B cell (primary cell): ENCODE measurements at regions of chr14 and their contacts with region 1.

Region 1: GRCh38 chr14:76876076-76876475 is 49.9 kb downstream of the LRRC74A start:
- DNase-seq: peak; percentile 68
- ATAC-seq: peak; percentile 55
- H3K4me3 ChIP-seq: no peak overlapping the region
- H3K4me3 Mint-ChIP-seq: no peak overlapping the region
- H3K27ac ChIP-seq: no peak overlapping the region
- H3K27ac Mint-ChIP-seq: no peak overlapping the region
- H3K4me1 ChIP-seq: no peaks in the 10 kb centered on the region
- H3K4me1 Mint-ChIP-seq: no peaks in the 10 kb centered on the region
- H3K27me3 ChIP-seq: peaks cover 0 to 3% (median 0%) of the 10 kb centered on the region in 4 experiments
- H3K27me3 Mint-ChIP-seq: peaks cover 4% of the 10 kb centered on the region
- CTCF ChIP-seq: peak; percentile 74

Region 2: DNA sequence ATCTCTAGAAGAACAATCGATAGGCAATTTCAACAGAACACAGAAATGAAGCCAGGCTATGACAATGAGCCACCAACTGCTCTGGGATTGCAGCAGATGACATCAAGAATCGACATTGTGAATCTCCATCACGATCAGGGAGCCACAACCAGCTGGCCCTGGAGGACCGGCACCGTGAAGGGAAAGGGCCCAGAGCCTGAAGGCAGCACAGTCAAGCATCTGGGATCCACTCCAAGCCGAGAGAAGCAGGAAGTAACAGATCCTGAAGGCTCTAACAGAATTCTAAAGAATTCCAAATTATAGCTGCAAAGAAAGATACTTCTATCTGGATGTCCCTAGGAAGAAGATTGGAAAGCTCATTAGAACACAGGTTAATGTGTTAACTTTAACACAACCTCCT is 11.1 kb after region 1 on chr14:
- CTCF ChIA-PET with region 1: interaction called, 10 read pairs
- POLR2A ChIA-PET with region 1: no interaction called
- intact Hi-C with region 1: no loop called
- DNase-seq: no peak
- ATAC-seq: no peak
- H3K4me3 ChIP-seq: no peak overlapping the region
- H3K4me3 Mint-ChIP-seq: no peak overlapping the region
- H3K27ac ChIP-seq: no peak overlapping the region
- H3K27ac Mint-ChIP-seq: no peak overlapping the region
- H3K4me1 ChIP-seq: peaks cover 7 to 10% of the 10 kb centered on the region in 2 donors
- H3K4me1 Mint-ChIP-seq: peaks cover 6% of the 10 kb centered on the region
- H3K27me3 ChIP-seq: peaks cover 0 to 4% (median 1%) of the 10 kb centered on the region in 4 experiments
- H3K27me3 Mint-ChIP-seq: peaks cover 14% of the 10 kb centered on the region
- CTCF ChIP-seq: no peak

Region 3: GRCh38 chr14:76918751-76919543 is 42.9 kb after region 1 on chr14:
- CTCF ChIA-PET with region 1: interaction called, 153 read pairs
- POLR2A ChIA-PET with region 1: no interaction called
- intact Hi-C with region 1: no loop called
- DNase-seq: no peak
- ATAC-seq: no peak
- H3K4me3 ChIP-seq: no peak overlapping the region
- H3K4me3 Mint-ChIP-seq: no peak overlapping the region
- H3K27ac ChIP-seq: no peak overlapping the region
- H3K27ac Mint-ChIP-seq: no peak overlapping the region
- H3K4me1 ChIP-seq: peaks cover 24 to 25% of the 10 kb centered on the region in 2 donors
- H3K4me1 Mint-ChIP-seq: peaks cover 20% of the 10 kb centered on the region
- H3K27me3 ChIP-seq: peaks cover 0 to 33% (median 5%) of the 10 kb centered on the region in 4 experiments
- H3K27me3 Mint-ChIP-seq: peaks cover 22% of the 10 kb centered on the region
- CTCF ChIP-seq: no peak

Region 4: DNA sequence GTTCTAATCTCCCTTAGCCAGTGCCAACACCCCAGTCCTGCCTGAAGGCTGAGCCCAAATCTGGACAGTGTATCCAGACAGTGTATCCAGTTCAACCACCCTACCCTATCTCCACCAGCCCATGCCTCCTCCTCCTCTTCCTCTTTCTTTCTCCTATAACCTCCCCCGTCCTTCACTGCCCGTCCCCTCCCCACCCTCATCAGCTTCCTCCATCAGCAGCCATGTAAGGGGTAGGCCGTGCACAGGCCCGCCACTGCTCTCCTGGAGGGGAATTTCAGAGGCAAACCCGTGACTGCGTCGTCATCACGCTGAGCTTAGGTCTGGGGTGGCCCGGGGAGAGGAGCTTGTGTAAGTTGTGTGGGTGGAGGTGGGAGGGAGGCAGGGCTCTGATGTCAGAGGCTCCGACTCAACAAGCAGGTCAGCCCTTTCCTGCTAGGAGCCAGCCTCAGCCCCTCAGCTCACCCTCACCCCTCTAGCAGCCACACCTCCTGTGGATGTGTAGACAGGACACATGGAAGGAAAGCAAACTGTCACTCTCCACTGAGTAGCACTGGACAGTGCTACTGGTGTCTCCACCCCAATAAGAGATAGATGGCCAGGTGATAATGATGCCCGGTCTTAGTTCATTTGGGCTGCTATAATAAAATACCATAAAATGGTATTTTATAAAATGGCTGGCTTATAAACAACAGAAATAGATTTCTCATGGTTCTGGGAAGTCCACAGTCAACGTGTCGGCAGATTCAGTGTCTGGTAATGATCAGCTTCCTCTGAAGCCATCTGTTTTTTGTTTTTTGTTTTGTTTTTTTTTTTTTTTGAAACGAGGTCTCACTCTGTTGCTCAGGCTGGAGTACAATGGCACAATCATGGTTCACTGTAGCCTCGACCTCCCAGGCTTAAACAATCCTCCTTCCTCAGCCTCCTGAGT is 102.0 kb after region 1 on chr14:
- CTCF ChIA-PET with region 1: no interaction called
- POLR2A ChIA-PET with region 1: no interaction called
- intact Hi-C with region 1: no loop called
- DNase-seq: peak; percentile 96
- ATAC-seq: peak; percentile 94
- H3K4me3 ChIP-seq: no peak overlapping the region
- H3K4me3 Mint-ChIP-seq: peak overlapping the region; percentile 79
- H3K27ac ChIP-seq: peak overlapping the region; percentile 75 to 82
- H3K27ac Mint-ChIP-seq: peak overlapping the region; percentile 93
- H3K4me1 ChIP-seq: peaks cover 18 to 25% of the 10 kb centered on the region in 2 donors
- H3K4me1 Mint-ChIP-seq: peaks cover 25% of the 10 kb centered on the region
- H3K27me3 ChIP-seq: no peaks in the 10 kb centered on the region
- H3K27me3 Mint-ChIP-seq: no peaks in the 10 kb centered on the region
- CTCF ChIP-seq: no peak

Region 5: GRCh38 chr14:77053046-77053841 is 177.2 kb after region 1 on chr14:
- CTCF ChIA-PET with region 1: interaction called, 125 read pairs
- POLR2A ChIA-PET with region 1: interaction called, 4 read pairs
- intact Hi-C with region 1: loop called (anchors 1 kb)
- DNase-seq: peak; percentile 89
- ATAC-seq: peak; percentile 94
- H3K4me3 ChIP-seq: no peak overlapping the region
- H3K4me3 Mint-ChIP-seq: no peak overlapping the region
- H3K27ac ChIP-seq: no peak overlapping the region
- H3K27ac Mint-ChIP-seq: no peak overlapping the region
- H3K4me1 ChIP-seq: peaks cover 11 to 15% of the 10 kb centered on the region in 2 donors
- H3K4me1 Mint-ChIP-seq: peaks cover 7% of the 10 kb centered on the region
- H3K27me3 ChIP-seq: no peaks in the 10 kb centered on the region
- H3K27me3 Mint-ChIP-seq: no peaks in the 10 kb centered on the region
- CTCF ChIP-seq: peak; percentile 95

Region 6: DNA sequence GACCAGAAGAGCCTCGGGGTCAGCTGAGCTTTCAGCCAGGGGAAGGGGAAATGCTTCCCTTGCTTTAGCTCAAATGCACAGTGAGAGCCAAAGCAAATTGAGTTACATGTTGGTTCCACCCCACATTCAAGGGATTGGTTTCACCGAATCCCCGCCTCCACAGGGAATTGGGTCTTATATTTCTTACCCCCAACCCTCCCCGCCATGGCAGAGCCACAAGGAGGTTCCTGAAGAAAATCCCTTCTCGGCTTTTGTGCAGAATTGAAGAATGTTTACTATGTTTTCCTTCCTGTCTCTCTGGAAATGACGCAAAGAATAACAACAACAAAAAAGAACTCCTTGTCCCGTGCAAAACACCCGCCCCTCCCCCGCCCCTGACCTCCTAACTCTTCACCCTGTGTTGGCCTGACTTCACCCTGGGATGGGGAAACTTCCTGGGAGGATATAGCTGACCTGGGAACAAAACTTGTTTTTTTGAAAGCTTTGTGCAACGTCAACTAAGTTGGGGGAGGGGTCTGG is 200.1 kb after region 1 on chr14:
- CTCF ChIA-PET with region 1: interaction called, 489 read pairs
- POLR2A ChIA-PET with region 1: no interaction called
- intact Hi-C with region 1: no loop called
- DNase-seq: no peak
- ATAC-seq: no peak
- H3K4me3 ChIP-seq: no peak overlapping the region
- H3K4me3 Mint-ChIP-seq: no peak overlapping the region
- H3K27ac ChIP-seq: no peak overlapping the region
- H3K27ac Mint-ChIP-seq: no peak overlapping the region
- H3K4me1 ChIP-seq: peaks cover 0 to 10% of the 10 kb centered on the region in 2 donors
- H3K4me1 Mint-ChIP-seq: peaks cover 6% of the 10 kb centered on the region
- H3K27me3 ChIP-seq: peaks cover 0 to 2% (median 0%) of the 10 kb centered on the region in 4 experiments
- H3K27me3 Mint-ChIP-seq: no peaks in the 10 kb centered on the region
- CTCF ChIP-seq: no peak

Region 7: GRCh38 chr14:77314043-77314442 is 438.0 kb after region 1 on chr14:
- CTCF ChIA-PET with region 1: interaction called, 15 read pairs
- POLR2A ChIA-PET with region 1: no interaction called
- intact Hi-C with region 1: loop called (anchors 2 kb)
- DNase-seq: no peak
- ATAC-seq: no peak
- H3K4me3 ChIP-seq: no peak overlapping the region
- H3K4me3 Mint-ChIP-seq: no peak overlapping the region
- H3K27ac ChIP-seq: no peak overlapping the region
- H3K27ac Mint-ChIP-seq: no peak overlapping the region
- H3K4me1 ChIP-seq: peaks cover 4 to 9% of the 10 kb centered on the region in 2 donors
- H3K4me1 Mint-ChIP-seq: peaks cover 4% of the 10 kb centered on the region
- H3K27me3 ChIP-seq: no peaks in the 10 kb centered on the region
- H3K27me3 Mint-ChIP-seq: no peaks in the 10 kb centered on the region
- CTCF ChIP-seq: no peak

Region 8: DNA sequence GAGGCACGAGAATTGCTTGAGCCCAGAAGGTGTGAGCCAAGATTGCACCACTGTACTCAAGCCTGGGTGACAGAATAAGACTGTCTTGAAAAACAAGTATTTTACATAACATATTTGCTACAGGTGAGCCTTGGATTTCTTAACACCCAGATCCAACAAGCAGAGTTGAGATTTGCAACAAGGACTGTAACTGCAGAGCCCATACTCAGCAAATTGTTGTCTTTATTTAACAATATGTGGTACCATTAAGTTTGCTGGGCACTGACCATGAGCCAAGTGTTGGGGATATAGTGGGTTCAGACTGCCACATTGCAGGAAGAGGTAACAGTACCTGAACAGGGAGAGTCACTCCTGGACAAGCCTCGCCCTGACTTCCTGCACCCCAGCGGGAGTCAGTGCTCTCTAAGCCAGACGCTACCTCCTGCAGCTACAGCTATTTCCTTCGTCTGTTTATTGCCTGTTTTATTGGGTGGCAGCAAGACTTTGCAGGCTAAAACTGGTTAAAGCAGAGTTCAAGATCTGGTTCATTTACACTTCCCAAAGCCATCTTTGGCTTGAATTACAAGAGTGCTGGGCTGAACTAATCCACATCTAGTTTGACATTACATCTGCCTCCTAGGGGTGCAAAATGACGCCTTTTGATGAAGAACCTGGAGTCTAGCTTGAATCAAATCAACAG is 594.3 kb after region 1 on chr14:
- CTCF ChIA-PET with region 1: no interaction called
- POLR2A ChIA-PET with region 1: no interaction called
- intact Hi-C with region 1: no loop called
- DNase-seq: no peak
- ATAC-seq: no peak
- H3K4me3 ChIP-seq: no peak overlapping the region
- H3K4me3 Mint-ChIP-seq: no peak overlapping the region
- H3K27ac ChIP-seq: no peak overlapping the region
- H3K27ac Mint-ChIP-seq: no peak overlapping the region
- H3K4me1 ChIP-seq: no peaks in the 10 kb centered on the region
- H3K4me1 Mint-ChIP-seq: no peaks in the 10 kb centered on the region
- H3K27me3 ChIP-seq: no peaks in the 10 kb centered on the region
- H3K27me3 Mint-ChIP-seq: no peaks in the 10 kb centered on the region
- CTCF ChIP-seq: no peak